Activated CD4-positive, alpha-beta T cell treated with anti-CD3 and anti-CD28 coated beads for 36 hours (primary cell): ENCODE measurements at regions of chr12 and their contacts with region 1.

Region 1: DNA sequence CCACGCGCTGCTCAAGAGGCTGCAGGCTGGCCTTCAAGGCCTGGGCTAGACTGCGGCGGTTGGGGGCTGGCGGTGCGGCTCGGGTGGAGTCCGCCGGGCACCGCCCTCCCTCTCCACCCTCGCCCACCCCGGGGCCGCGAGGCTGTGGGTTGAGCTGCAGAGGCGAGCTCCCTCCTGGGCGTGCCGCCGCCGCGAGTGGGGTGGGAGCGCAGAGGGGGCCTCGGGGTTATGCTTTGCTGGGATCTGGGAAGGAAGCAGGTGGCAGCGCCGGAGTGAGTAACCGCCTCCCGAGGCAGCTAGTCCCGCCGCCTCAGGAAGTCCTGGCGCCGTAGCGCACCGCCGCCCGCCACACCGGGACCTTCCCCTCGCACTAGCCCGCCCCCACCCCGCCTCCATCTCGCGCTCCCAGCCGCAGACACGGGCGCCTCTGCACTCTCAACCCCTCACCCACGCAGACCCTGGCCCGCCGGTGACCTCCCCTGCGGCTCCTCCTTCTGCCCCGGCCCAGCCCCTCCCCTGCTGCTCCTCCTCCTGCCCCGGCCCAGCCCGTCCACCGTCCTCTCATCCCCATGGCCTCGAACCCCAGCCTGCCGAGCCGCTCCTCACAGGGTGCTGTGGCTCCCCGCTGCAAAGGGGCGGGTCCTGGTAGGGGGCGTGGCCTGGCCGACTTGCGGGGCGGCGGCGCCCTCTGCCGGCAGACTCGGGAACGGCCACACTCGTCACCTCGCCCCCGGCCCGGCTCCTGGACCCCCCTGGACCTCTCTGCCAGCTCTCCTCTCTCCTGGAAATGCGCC is 16.6 kb downstream of the TAMALIN start:
- DNase-seq: peak; percentile 97
- ATAC-seq: peak; percentile 69
- H3K4me3 Mint-ChIP-seq: peak overlapping the region; percentile 77
- H3K27ac Mint-ChIP-seq: peak overlapping the region; percentile 97
- H3K4me1 Mint-ChIP-seq: peaks cover 37% of the 10 kb centered on the region
- H3K27me3 Mint-ChIP-seq: no peaks in the 10 kb centered on the region

Region 2: GRCh38 chr12:50842637-50843493 is 1180.5 kb before region 1 on chr12 and contains the start of gene TMPRSS12:
- CTCF ChIA-PET with region 1: no interaction called
- POLR2A ChIA-PET with region 1: no interaction called
- intact Hi-C with region 1: no loop called
- DNase-seq: peak; percentile 13
- ATAC-seq: no peak
- H3K4me3 Mint-ChIP-seq: no peak within 1 kb of the TSS
- H3K27ac Mint-ChIP-seq: no peak within 1 kb of the TSS
- H3K4me1 Mint-ChIP-seq: no peaks in the 10 kb centered on the region
- H3K27me3 Mint-ChIP-seq: peaks cover 11% of the 10 kb centered on the region
- total RNA-seq, gene TMPRSS12: not detected

Region 3: GRCh38 chr12:51759175-51759574 is 264.2 kb before region 1 on chr12:
- CTCF ChIA-PET with region 1: no interaction called
- POLR2A ChIA-PET with region 1: no interaction called
- intact Hi-C with region 1: no loop called
- DNase-seq: no peak
- ATAC-seq: no peak
- H3K4me3 Mint-ChIP-seq: no peak overlapping the region
- H3K27ac Mint-ChIP-seq: no peak overlapping the region
- H3K4me1 Mint-ChIP-seq: no peaks in the 10 kb centered on the region
- H3K27me3 Mint-ChIP-seq: peaks cover 2% of the 10 kb centered on the region

Region 4: DNA sequence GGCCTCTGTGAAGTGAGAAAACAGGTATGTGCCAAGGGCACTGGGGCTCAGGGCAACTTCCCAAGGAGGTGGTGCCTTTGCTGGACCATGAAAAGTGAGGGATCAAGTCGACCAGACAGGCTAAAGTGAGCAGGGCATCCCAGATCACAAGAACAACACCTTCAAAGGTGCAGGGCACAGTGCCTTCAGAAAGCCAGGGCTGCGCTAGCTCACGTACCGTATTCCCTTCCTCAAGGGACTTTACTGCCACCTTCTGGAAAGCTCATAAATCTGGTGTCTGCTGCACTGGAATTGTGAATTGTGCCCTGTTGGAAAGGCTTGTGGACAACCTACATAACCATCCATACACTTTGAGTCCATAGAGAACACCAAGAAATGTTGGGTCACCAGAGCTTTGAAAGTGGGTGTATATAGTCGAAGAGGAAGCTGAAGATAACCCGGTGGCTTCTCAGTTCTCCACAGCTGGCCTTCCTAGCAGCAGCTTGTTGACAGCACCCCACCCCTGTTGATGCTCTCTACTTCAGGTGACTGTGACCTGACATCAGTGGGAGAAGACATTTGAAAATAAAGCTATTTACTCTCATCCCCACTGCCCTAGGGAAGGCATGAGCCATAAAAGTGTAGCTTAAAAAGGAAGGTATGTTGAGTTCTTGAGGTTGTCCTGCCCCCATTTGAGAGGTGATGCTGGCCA is 199.4 kb before region 1 on chr12:
- CTCF ChIA-PET with region 1: interaction called, 3 read pairs
- POLR2A ChIA-PET with region 1: interaction called, 4 read pairs
- intact Hi-C with region 1: loop called in 1 of 2 experiments (anchors 2 kb)
- DNase-seq: peak; percentile 55
- ATAC-seq: no peak
- H3K4me3 Mint-ChIP-seq: no peak overlapping the region
- H3K27ac Mint-ChIP-seq: peak overlapping the region; percentile 13
- H3K4me1 Mint-ChIP-seq: peaks cover 38% of the 10 kb centered on the region
- H3K27me3 Mint-ChIP-seq: no peaks in the 10 kb centered on the region

Region 5: DNA sequence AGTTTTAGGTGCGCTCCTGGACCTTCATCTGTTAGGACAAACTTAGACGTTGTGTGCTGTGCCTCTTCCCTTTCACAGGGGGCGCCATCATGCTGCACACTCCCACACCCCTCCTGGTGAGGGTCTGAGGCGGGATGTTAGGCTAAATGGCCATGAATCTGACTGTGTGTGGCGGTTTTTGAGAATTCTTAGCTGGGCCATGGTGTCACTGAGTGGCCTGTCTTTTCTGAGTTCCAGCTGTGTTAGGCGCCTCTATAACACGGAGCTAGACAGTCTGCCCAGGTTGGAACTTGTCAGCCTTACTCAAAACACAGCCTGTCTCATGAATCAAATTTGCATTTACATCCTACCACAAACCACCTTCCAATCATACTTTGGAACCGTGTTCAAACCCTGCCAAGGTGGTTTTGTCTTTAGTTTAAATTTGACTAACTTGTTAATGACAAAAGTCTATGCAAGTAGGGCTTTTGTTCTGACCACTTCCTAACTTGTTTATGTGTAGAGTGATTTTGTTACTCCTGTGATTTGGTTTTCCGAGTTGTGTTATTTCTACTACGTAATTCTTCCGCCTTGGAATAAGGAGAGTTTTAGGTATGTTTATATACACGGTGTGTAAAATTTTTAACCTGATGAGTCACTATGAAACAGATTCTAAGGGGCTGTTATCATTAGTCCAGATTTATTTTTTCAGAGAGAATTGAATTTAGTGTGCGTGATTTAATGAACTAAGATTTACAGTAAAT is 52.3 kb before region 1 on chr12:
- CTCF ChIA-PET with region 1: interaction called, 21 read pairs
- POLR2A ChIA-PET with region 1: no interaction called
- intact Hi-C with region 1: loop called in 1 of 2 experiments (anchors 1 kb)
- DNase-seq: peak; percentile 70
- ATAC-seq: peak; percentile 85
- H3K4me3 Mint-ChIP-seq: peak overlapping the region; percentile 53
- H3K27ac Mint-ChIP-seq: peak overlapping the region; percentile 82
- H3K4me1 Mint-ChIP-seq: peaks cover 64% of the 10 kb centered on the region
- H3K27me3 Mint-ChIP-seq: no peaks in the 10 kb centered on the region

Region 6: DNA sequence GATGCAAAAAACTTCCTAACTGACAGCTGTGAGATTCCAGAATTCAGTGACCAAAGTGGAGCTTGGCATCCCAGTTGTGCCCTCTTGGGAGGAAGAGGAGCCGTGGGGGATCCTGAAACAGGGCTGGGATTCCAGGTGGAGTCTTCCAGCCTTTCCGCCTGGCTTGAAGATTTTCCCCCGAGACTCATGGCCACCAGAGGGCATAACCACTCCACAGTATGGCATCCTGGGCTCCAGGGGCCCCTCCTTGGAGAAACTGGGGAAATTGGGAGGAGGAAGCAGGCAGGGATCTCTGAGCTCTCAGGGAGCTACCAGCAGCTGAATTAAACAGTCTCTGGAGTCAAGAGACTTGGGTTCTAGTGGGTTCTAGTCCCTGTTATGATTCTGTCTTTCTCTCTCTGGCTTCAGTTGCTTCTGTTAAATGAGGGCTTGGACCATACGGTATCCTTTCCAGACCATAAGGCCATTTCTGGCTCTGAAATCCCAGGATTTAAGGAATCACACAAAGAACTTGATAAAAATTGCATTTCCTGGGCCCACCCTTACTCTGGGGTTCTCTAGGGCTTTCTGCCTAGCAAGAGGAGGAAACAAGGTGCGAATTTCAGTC is 19.2 kb before region 1 on chr12:
- CTCF ChIA-PET with region 1: interaction called, 64 read pairs
- POLR2A ChIA-PET with region 1: interaction called, 3 read pairs
- intact Hi-C with region 1: loop called (anchors 1 kb)
- DNase-seq: peak; percentile 43
- ATAC-seq: no peak
- H3K4me3 Mint-ChIP-seq: no peak overlapping the region
- H3K27ac Mint-ChIP-seq: no peak overlapping the region
- H3K4me1 Mint-ChIP-seq: peaks cover 13% of the 10 kb centered on the region
- H3K27me3 Mint-ChIP-seq: peaks cover 4% of the 10 kb centered on the region

Region 7: DNA sequence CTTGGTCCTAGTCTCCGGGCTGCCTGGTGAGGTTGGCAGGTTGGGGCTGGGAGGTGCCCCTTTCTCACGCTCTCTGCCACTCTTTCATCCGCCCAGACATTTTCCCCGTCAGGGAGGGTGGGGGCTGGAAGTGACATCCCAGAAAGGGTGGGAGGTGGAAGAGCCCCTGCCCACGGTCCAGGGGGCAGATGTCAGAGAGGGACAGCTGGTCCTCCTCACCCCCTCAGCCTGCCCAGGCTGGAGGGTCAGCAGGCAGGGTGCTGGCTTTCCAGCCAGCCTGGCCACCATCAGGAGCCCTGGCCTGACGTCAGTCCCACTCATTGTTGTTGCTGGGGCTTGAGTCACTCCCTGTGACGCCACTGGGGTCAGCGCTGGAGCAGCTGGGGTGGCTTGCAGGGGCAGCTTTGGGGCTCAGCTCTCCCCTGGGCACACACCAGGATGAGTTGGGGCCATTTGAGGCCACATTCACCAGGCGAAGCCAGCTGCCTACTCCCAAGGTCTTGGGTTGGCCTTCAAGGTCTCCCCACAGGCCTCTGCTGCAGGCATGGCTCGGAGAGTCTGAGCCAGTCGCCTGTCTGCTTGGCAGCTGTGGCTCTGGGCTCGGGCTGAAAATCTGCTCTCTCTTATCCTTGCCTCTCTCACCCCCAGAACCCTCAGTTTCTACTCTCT is 40.7 kb after region 1 on chr12:
- CTCF ChIA-PET with region 1: interaction called, 253 read pairs
- POLR2A ChIA-PET with region 1: interaction called, 3 read pairs
- intact Hi-C with region 1: loop called (anchors 1 kb)
- DNase-seq: no peak
- ATAC-seq: no peak
- H3K4me3 Mint-ChIP-seq: no peak overlapping the region
- H3K27ac Mint-ChIP-seq: no peak overlapping the region
- H3K4me1 Mint-ChIP-seq: peaks cover 14% of the 10 kb centered on the region
- H3K27me3 Mint-ChIP-seq: no peaks in the 10 kb centered on the region

Region 8: DNA sequence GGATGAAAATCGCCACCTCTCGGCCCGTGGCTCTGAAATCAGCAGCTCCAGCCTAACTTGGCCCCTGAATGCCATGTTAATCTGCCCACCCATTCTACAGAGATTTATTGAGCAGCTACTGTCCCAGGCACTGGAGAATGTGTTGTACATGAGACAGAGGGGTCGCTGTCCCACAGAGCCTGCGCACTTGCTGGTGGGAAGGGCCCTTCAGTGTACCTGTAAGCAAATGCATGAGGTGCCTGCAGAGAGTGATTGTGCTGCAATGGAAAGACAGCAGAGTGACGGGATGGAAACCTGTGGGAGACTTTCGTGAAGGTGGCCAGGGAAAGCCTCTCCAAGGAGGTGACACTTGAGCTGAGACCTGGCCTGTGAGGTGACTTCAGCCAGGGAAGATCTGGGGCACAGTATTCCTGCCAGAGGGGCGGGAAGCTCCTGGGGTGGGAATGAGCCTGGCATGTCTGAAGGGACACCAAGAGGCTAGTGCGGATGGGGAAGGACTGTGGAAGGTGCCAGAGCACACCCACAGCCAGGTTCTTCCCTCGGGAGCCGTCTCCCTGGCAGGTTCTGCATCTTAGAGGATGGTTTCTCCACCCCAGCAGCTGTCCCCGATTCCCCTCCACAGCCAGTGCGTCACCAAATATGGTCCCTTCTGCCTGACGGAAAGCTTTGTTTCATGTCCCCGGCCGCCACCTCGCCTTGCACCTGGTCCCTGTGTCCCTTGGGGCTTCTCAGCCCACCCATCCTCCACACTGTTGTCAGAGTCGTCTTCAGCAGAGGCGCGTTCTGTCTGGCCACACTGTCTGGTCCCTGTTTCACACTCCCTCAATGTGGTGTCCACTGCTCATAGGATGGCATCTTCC is 64.8 kb after region 1 on chr12:
- CTCF ChIA-PET with region 1: interaction called, 69 read pairs
- POLR2A ChIA-PET with region 1: interaction called, 5 read pairs
- intact Hi-C with region 1: loop called (anchors 1 kb)
- DNase-seq: no peak
- ATAC-seq: no peak
- H3K4me3 Mint-ChIP-seq: no peak overlapping the region
- H3K27ac Mint-ChIP-seq: no peak overlapping the region
- H3K4me1 Mint-ChIP-seq: peaks cover 2% of the 10 kb centered on the region
- H3K27me3 Mint-ChIP-seq: peaks cover 31% of the 10 kb centered on the region